ENCODE measurements at regions of chr1 and their contacts with region 1.

Region 1: DNA sequence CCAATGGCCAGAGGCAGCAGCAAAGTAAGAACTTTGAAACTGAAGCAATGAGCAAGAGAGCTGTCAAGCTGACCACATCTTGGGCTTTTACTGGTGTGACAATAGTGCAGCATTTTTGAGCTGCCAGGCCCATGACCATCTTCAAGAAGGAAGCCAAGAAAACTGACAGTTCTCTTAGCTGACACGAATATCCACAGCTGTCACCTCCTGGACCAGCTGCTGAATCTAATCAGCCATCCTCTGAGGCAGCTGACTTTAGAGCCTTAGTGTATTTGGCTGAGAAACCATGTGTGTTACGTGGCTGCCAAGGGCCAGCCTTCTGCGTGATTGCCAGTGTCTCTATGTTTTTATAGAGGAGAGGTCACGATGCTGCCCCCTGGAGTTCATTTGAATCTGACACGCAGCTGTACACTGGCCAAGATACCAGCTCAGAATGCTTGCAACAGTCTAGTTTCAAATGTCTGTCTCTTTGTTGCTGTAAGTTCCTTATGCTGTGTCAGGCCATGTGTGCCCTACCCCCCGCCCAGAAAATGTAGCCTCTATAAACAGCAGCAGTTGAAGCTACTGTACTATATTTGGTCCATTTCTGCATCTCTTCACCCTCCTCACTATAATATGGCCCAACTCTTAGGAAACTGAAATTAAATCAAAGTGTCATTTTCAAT is 39.7 kb downstream of the PALMD start:
- DNase-seq: peak; percentile 86

Region 2: GRCh38 chr1:99170516-99170915 is 515.1 kb before region 1 on chr1:
- intact Hi-C with region 1: loop called in 1 of 2 experiments (anchors 10 kb)
- DNase-seq: no peak

Region 3: DNA sequence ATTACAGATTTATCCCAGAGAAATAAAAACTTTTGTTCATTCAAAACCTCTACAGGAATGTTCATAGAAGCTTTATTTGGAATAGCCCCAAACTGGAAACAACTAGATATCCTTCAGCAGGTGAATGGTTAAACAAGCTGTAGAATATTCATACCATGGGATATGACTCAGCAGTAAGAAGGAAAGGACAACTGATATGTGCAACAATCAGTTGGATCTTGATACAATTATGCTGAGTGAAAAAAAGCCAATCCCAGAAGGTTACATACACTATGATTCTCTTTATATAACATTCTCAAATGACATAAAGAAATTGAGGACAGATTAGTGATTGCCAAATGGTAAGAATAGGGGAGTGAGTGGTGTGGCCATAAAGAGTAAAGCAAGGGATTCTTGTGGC is 1927.9 kb after region 1 on chr1:
- intact Hi-C with region 1: no loop called
- DNase-seq: no peak

Measured in posterior vena cava (tissue), 2 donors.